ENCODE measurements at regions of chr3 and their contacts with region 1.

Region 1: DNA sequence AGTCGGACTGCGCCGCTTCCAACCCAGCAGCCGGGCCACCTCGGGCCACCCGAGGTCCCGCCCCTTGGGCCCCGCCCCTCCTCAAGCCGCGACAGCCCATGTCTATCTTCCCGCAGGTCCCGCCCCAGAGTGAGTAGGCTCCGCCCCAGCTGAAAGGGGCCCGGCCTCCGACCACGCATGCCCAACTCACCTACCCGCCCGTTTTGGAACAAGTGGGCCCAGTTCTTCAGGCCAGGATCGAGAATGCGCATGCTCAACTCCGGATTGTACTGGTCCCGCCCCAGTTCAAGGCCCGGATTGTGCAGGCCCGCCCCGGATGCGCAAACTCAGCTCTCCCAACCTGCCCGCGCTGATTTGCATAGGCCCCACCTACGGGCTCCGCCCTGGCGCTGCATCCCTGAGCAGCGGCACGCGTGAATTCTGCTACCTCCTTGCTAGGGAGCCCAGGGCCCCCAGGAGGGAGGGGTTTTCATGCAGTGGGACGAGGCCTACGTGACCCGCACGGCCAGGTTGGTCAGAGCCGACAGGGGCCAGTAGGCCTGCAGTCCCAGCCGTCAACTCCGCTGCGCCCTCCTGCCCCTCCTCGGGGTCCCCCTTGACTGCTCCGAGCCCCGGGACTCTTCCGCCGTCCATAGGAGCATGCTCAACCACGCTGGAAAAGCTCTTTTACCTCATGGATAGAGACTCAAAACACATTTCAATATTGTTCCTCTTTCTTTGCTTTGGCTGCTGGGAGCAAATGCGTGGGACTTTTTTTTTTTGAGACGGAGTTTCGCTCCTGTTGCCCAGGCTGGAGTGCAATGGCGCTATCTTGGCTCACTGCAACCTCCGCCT is at the start of gene PFKFB4:
- DNase-seq: peak; percentile 99
- ATAC-seq: peak; percentile 82
- H3K4me3 Mint-ChIP-seq: peak within 1 kb of the TSS; percentile 86
- H3K27ac Mint-ChIP-seq: peak within 1 kb of the TSS; percentile 95
- H3K4me1 Mint-ChIP-seq: peaks cover 67% of the 10 kb centered on the region
- H3K27me3 Mint-ChIP-seq: no peaks in the 10 kb centered on the region
- CTCF ChIP-seq: no peak
- total RNA-seq, gene PFKFB4: 18.0 to 26.8 TPM (median 26.7 TPM) in 3 replicates

Region 2: DNA sequence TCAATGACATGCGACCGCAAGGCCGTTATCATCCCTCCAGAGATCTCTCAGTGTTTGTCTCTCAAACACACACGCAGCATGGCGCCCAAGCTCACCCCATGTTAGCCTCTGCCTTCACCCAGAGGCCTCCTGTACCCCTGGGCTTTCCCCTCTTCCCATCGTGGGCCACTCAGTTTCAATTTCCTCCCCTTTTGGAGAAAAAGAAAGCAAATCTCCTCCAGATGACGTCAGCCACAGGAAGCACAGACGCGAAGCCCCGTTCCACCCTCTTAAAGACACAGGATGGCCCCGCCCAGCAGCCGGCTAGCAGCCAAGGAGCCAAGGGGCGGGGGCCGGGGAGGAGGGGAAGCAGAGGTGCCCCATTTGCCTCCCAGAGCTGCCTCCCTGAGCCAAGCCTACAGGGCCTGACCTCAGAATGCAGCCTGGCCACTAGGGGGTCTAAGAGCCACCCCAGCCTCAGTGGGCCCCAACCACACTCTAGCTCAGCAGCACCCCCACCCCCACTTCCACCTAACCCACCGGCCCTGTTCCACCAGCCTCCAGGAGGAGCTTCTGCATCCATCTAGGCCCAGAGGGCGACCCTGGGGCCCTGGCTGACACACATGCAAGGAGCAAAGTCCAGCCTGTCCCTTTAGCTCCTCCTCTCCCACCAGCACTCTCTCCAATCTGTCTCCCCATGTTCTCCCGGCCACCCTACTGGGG is 83.9 kb before region 1 on chr3:
- CTCF ChIA-PET with region 1: interaction called, 54 read pairs
- POLR2A ChIA-PET with region 1: interaction called, 7 read pairs
- DNase-seq: peak; percentile 96
- ATAC-seq: peak; percentile 82
- H3K4me3 Mint-ChIP-seq: peak overlapping the region; percentile 91
- H3K27ac Mint-ChIP-seq: peak overlapping the region; percentile 99
- H3K4me1 Mint-ChIP-seq: peaks cover 30% of the 10 kb centered on the region
- H3K27me3 Mint-ChIP-seq: no peaks in the 10 kb centered on the region; the same call in none of the 2 replicates
- CTCF ChIP-seq: peak; percentile 45; the same call in 1 of the 2 replicates

Region 3: DNA sequence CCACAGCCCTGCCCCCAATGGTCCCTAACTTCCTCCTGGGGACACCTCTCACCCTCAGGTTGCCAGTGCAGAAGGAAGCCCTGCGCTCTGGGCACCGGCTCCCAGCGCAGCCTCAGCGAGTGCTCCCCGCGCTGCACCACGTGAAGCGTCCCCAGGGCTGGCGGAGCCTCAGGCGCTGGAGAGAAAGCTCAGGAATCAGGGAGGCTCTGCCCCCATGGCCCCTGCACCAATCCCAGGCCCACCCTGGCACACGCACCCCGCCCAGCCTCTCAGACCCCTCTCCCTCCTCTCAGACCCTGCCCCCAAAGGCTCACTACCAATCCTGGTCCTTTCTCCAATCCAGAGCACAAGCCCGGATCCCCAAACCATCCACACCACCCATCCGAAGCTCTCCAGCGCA is 31.2 kb after region 1 on chr3:
- CTCF ChIA-PET with region 1: interaction called, 12 read pairs
- POLR2A ChIA-PET with region 1: interaction called, 3 read pairs
- DNase-seq: no peak
- ATAC-seq: peak; percentile 72
- H3K4me3 Mint-ChIP-seq: no peak overlapping the region
- H3K27ac Mint-ChIP-seq: peak overlapping the region; percentile 61; the same call in 1 of the 2 replicates
- H3K4me1 Mint-ChIP-seq: peaks cover 7% of the 10 kb centered on the region
- H3K27me3 Mint-ChIP-seq: no peaks in the 10 kb centered on the region; the same call in 1 of the 2 replicates
- CTCF ChIP-seq: no peak

Region 4: GRCh38 chr3:48820612-48821324 is 263.8 kb after region 1 on chr3:
- CTCF ChIA-PET with region 1: no interaction called
- POLR2A ChIA-PET with region 1: no interaction called
- DNase-seq: no peak
- ATAC-seq: no peak
- H3K4me3 Mint-ChIP-seq: no peak overlapping the region
- H3K27ac Mint-ChIP-seq: peak overlapping the region; percentile 33
- H3K4me1 Mint-ChIP-seq: peaks cover 20% of the 10 kb centered on the region
- H3K27me3 Mint-ChIP-seq: no peaks in the 10 kb centered on the region
- CTCF ChIP-seq: no peak

Region 5: GRCh38 chr3:49112262-49112661 is 555.3 kb after region 1 on chr3:
- CTCF ChIA-PET with region 1: no interaction called
- POLR2A ChIA-PET with region 1: no interaction called
- DNase-seq: no peak
- ATAC-seq: peak; percentile 30; the same call in 1 of the 2 replicates
- H3K4me3 Mint-ChIP-seq: no peak overlapping the region
- H3K27ac Mint-ChIP-seq: no peak overlapping the region
- H3K4me1 Mint-ChIP-seq: no peaks in the 10 kb centered on the region
- H3K27me3 Mint-ChIP-seq: no peaks in the 10 kb centered on the region
- CTCF ChIP-seq: no peak